ENCODE measurements at regions of chr1 and their contacts with region 1.

Region 1: DNA sequence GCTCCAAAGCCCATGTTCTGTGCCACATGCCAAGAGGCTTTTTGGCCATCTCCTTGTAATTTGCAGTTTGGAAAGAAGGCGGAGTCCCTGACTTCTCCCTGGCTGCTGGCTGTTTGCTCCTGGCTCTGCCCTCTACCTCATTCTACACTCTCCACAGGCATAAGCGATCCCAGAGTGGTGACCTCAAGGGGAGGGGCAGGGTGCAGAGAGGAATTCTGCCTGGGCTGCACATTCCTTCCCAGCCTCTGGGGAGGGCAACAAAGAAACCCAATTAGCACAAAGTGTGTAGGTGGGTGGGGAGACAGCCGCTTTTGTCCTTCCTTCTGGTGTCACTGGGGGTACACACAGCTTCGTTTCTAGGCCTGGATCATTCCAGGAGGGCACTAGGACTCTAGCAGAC is 95.3 kb downstream of the HIVEP3 start:
- DNase-seq: peak in 1 of 2 donors; percentile 40
- ATAC-seq: peak; percentile 55 to 95 (median 79)
- H3K4me3 ChIP-seq: no peak overlapping the region
- H3K27ac ChIP-seq: peak overlapping the region in 2 of 10 donors; percentile 2 to 41
- H3K4me1 ChIP-seq: peaks cover 9 to 35% (median 23%) of the 10 kb centered on the region in 9 donors
- H3K27me3 ChIP-seq: no peaks in the 10 kb centered on the region
- CTCF ChIP-seq: no peak

Region 2: GRCh38 chr1:41773144-41773591 is 50.3 kb before region 1 on chr1:
- intact Hi-C with region 1: loop called in 1 of 10 experiments (anchors 1 kb)
- DNase-seq: no peak
- ATAC-seq: peak in 2 of 8 donors; percentile 13 to 35
- H3K4me3 ChIP-seq: no peak overlapping the region
- H3K27ac ChIP-seq: no peak overlapping the region
- H3K4me1 ChIP-seq: peaks cover 0 to 35% (median 7%) of the 10 kb centered on the region in 9 donors
- H3K27me3 ChIP-seq: no peaks in the 10 kb centered on the region
- CTCF ChIP-seq: no peak

Region 3: GRCh38 chr1:42003443-42003842 is 180.0 kb after region 1 on chr1:
- intact Hi-C with region 1: no loop called
- DNase-seq: peak in 1 of 2 donors; percentile 13
- ATAC-seq: peak in 1 of 8 donors; percentile 31
- H3K4me3 ChIP-seq: no peak overlapping the region
- H3K27ac ChIP-seq: no peak overlapping the region
- H3K4me1 ChIP-seq: peaks cover 0 to 9% (median 7%) of the 10 kb centered on the region in 9 donors
- H3K27me3 ChIP-seq: no peaks in the 10 kb centered on the region
- CTCF ChIP-seq: no peak

Measured in heart right ventricle (tissue), 16 donors.